Aorta (tissue), 5 donors: ENCODE measurements at regions of chr4 and their contacts with region 1.

Region 1: GRCh38 chr4:158729716-158730559 is 6.7 kb upstream of the PPID start:
- DNase-seq: peak; percentile 73 to 77
- ATAC-seq: peak; percentile 87
- H3K4me3 ChIP-seq: no peak overlapping the region
- H3K27ac ChIP-seq: no peak overlapping the region
- H3K4me1 ChIP-seq: no peaks in the 10 kb centered on the region
- H3K27me3 ChIP-seq: no peaks in the 10 kb centered on the region

Region 2: GRCh38 chr4:158768555-158769174 is 38.7 kb after region 1 on chr4 and contains the start of gene FNIP2:
- intact Hi-C with region 1: loop called in 1 of 2 experiments (anchors 5 kb)
- DNase-seq: peak; percentile 85 to 92
- ATAC-seq: peak; percentile 93
- H3K4me3 ChIP-seq: peak within 1 kb of the TSS; percentile 85 to 89
- H3K27ac ChIP-seq: peak within 1 kb of the TSS; percentile 72 to 91
- H3K4me1 ChIP-seq: peaks cover 2 to 9% of the 10 kb centered on the region in 2 donors
- H3K27me3 ChIP-seq: no peaks in the 10 kb centered on the region
- total RNA-seq, gene FNIP2: 71.0 to 97.8 TPM

Region 3: GRCh38 chr4:158850800-158851644 is 121.1 kb after region 1 on chr4:
- intact Hi-C with region 1: loop called (anchors 1 to 2 kb)
- DNase-seq: no peak
- ATAC-seq: peak; percentile 44
- H3K4me3 ChIP-seq: no peak overlapping the region
- H3K27ac ChIP-seq: no peak overlapping the region
- H3K4me1 ChIP-seq: peaks cover 0 to 3% of the 10 kb centered on the region in 2 donors
- H3K27me3 ChIP-seq: no peaks in the 10 kb centered on the region

Region 4: GRCh38 chr4:159201168-159201567 is 471.2 kb after region 1 on chr4:
- intact Hi-C with region 1: loop called (anchors 5 to 10 kb)
- DNase-seq: no peak
- ATAC-seq: no peak
- H3K4me3 ChIP-seq: no peak overlapping the region
- H3K27ac ChIP-seq: no peak overlapping the region
- H3K4me1 ChIP-seq: peaks cover 0 to 8% of the 10 kb centered on the region in 2 donors
- H3K27me3 ChIP-seq: no peaks in the 10 kb centered on the region

Region 5: GRCh38 chr4:159446266-159446976 is 716.5 kb after region 1 on chr4:
- intact Hi-C with region 1: loop called in 1 of 2 experiments (anchors 5 kb)
- DNase-seq: no peak
- ATAC-seq: peak; percentile 94
- H3K4me3 ChIP-seq: no peak overlapping the region
- H3K27ac ChIP-seq: no peak overlapping the region
- H3K4me1 ChIP-seq: no peaks in the 10 kb centered on the region
- H3K27me3 ChIP-seq: no peaks in the 10 kb centered on the region